Psoas muscle (tissue), 8 donors: ENCODE measurements at regions of chr16 and their contacts with region 1.

Region 1: GRCh38 chr16:11768849-11769248 is 26.2 kb upstream of the TXNDC11 start:
- DNase-seq: no peak
- ATAC-seq: no peak
- H3K4me3 ChIP-seq: no peak overlapping the region
- H3K27ac ChIP-seq: no peak overlapping the region
- H3K4me1 ChIP-seq: no peaks in the 10 kb centered on the region
- H3K27me3 ChIP-seq: no peaks in the 10 kb centered on the region
- CTCF ChIP-seq: no peak

Region 2: GRCh38 chr16:11727796-11728543 is 40.9 kb before region 1 on chr16:
- intact Hi-C with region 1: no loop called
- DNase-seq: no peak
- ATAC-seq: peak in 3 of 4 donors; percentile 33 to 47 (median 33)
- H3K4me3 ChIP-seq: no peak overlapping the region
- H3K27ac ChIP-seq: no peak overlapping the region
- H3K4me1 ChIP-seq: peaks cover 9% of the 10 kb centered on the region
- H3K27me3 ChIP-seq: no peaks in the 10 kb centered on the region
- CTCF ChIP-seq: no peak

Region 3: DNA sequence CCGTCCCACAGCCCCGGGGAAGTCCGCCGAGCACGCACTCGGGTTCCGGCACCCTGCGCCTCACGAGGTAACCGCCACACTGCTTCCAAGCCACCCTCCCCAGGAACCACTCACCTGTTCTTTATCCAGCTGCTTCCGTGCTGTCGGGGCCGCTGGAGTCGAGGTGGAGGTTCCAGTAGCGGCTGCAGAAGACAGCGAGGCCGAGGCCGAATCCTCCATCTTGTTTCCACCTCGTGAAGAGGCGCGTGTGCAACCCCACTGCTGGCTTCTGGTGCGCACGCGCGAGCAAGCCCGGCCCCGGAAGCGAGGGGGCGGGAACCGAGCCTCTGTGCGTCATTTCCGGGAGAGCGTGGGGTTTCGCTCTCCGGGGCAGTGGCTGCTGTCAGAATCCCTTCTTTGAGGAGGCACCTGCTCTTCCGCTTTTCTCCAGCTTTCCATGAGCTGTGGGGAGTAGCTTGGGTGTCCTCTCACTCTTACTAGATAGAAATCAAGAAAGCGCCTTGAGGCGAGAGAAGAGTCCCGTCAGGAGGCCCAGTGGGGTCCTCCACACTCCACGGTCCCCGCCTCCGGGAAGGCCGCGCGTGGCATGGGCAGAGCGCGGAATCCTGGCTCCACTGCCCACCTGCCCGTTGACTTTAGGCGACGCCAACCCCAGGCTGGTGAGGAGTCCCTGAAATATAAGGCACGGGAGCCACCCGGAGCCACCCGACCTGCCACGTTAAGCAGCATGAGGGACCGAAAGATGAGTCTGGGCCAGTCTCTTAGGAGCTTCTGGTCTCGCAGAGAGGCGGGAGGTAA is 82.6 kb after region 1 on chr16 and contains the start of gene RSL1D1:
- intact Hi-C with region 1: loop called in 1 of 2 experiments (anchors 10 kb)
- DNase-seq: peak; percentile 90 to 96
- ATAC-seq: peak; percentile 97 to 98 (median 98)
- H3K4me3 ChIP-seq: peak within 1 kb of the TSS; percentile 99
- H3K27ac ChIP-seq: peak within 1 kb of the TSS; percentile 97
- H3K4me1 ChIP-seq: peaks cover 22% of the 10 kb centered on the region
- H3K27me3 ChIP-seq: no peaks in the 10 kb centered on the region
- CTCF ChIP-seq: no peak
- total RNA-seq, gene RSL1D1: 197 to 271 (median 256) TPM

Region 4: DNA sequence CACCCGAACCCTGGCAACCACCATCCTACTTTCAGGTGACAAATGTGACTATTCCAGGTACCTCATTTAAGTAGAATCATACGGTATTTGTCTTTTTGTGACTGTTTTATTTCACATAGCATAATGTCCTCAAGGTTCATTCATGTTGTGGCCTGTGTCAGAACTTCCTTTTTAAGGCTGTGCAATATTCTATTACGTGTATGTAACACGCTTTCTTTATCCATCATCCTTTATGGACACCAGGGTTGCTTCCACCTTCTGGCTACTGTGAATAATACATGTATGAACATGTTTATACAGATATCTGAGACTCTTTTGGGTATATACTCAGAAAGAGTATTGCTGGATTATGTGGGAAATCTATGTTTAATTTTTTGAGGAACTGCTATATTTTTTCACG is 111.2 kb after region 1 on chr16:
- intact Hi-C with region 1: loop called (anchors 5 kb)
- DNase-seq: no peak
- ATAC-seq: peak in 2 of 4 donors; percentile 32 to 43
- H3K4me3 ChIP-seq: no peak overlapping the region
- H3K27ac ChIP-seq: no peak overlapping the region
- H3K4me1 ChIP-seq: no peaks in the 10 kb centered on the region
- H3K27me3 ChIP-seq: no peaks in the 10 kb centered on the region
- CTCF ChIP-seq: no peak